ENCODE measurements at regions of chr14 and their contacts with region 1.

Region 1: DNA sequence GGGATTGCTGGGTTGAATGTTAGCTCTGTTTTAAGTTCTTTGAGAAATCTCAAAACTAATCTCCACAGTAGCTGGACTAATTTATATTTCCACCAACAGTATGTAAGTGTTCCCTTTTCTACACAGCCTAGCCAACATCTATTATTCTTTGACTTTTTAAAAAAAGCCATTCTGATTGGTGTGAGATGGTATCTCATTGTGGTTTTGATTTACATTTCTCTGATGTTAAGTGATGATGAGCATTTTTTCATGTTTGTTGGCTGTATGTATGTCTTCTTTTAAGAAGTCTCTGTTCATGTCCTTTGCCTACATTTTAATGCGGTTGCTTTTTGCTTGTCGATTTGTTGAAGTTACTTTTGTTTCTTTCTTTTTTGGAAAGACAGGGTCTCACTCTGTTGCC is 301.1 kb upstream of the OR4E1 start:
- DNase-seq: no peak
- H3K4me3 ChIP-seq: no peak overlapping the region
- H3K27ac ChIP-seq: no peak overlapping the region
- H3K4me1 ChIP-seq: no peaks in the 10 kb centered on the region
- H3K27me3 ChIP-seq: no peaks in the 10 kb centered on the region
- CTCF ChIP-seq: no peak

Region 2: DNA sequence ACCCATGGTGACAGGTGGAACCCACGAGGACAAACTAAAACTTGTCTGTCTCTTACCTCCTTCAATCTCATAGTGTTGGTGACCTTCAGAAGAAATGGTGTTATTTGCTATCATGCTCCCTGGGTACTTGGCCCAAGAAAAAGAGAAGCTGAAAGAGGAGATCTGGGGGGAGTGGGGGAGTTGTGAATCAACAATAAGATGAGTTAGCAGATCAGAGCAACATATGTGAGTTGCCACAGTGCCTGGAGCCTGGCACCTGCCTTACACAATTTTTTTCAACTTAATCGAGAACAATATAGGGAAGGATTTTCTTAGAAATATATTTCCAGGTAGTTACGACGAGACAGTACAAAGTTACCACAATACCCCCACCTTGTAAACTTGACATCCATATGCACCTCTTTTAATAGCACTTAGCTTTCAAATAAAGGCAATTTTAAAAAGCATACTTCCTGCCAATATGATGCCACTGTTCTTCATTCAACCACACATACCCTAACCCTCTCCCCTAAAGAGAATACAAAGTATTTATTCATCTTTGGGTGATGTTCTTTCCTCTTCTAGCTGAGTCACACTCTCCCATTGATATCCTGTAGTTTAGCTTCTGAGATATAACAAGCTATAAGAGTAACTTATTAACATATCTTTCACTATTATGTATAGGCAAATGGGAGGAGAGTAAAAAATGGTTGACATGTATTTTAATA is 123.0 kb after region 1 on chr14:
- CTCF ChIA-PET with region 1: interaction called, 22 read pairs
- POLR2A ChIA-PET with region 1: no interaction called
- intact Hi-C with region 1: no loop called
- DNase-seq: no peak
- H3K4me3 ChIP-seq: no peak overlapping the region
- H3K27ac ChIP-seq: no peak overlapping the region
- H3K4me1 ChIP-seq: no peaks in the 10 kb centered on the region
- H3K27me3 ChIP-seq: no peaks in the 10 kb centered on the region
- CTCF ChIP-seq: no peak